Activated T-helper 1 cell treated with anti-CD3 and anti-CD28 coated beads, Interleukin-12 subunit alpha, Interleukin-12 subunit beta, Interleukin-2, Interleukin-4 antibody, amounts not matched to agents 30 ng/mL and 10 ng/mL and 1 ng/mL, durations not matched to agents 14 hours and 24 hours and 36 hours (primary cell): ENCODE measurements at regions of chr2 and their contacts with region 1.

Region 1: GRCh38 chr2:196160101-196160500 is 11.3 kb downstream of the STK17B start:
- DNase-seq: peak; percentile 74
- H3K4me3 Mint-ChIP-seq: peak overlapping the region; percentile 76
- H3K27ac Mint-ChIP-seq: peak overlapping the region; percentile 93
- H3K4me1 Mint-ChIP-seq: peaks cover 91% of the 10 kb centered on the region
- H3K27me3 Mint-ChIP-seq: no peaks in the 10 kb centered on the region

Region 2: GRCh38 chr2:196137271-196137670 is 22.8 kb before region 1 on chr2:
- intact Hi-C with region 1: loop called (anchors 2 kb)
- DNase-seq: no peak
- H3K4me3 Mint-ChIP-seq: no peak overlapping the region
- H3K27ac Mint-ChIP-seq: no peak overlapping the region
- H3K4me1 Mint-ChIP-seq: peaks cover 41% of the 10 kb centered on the region
- H3K27me3 Mint-ChIP-seq: no peaks in the 10 kb centered on the region

Region 3: DNA sequence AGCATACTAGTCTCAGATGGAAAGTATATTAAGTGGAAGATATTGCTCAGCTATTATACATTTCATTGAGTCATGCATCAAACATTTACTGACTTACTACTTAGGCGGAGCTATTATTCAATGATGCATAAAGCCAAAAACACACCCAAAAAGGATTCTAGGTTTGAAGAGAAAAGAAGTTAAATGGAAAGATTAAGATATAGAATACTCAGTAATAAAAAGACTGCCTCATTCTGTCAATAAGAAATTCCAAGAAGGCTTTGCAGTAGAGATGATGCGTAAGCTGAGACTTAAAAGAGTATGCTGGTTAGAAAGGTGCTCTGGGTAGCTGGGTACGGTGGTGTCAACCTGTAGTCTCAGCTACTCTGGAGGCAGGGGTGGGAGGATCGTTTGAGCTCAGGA is 16.4 kb before region 1 on chr2:
- intact Hi-C with region 1: loop called (anchors 2 kb)
- DNase-seq: no peak
- H3K4me3 Mint-ChIP-seq: peak overlapping the region; percentile 23
- H3K27ac Mint-ChIP-seq: peak overlapping the region; percentile 88
- H3K4me1 Mint-ChIP-seq: peaks cover 59% of the 10 kb centered on the region
- H3K27me3 Mint-ChIP-seq: no peaks in the 10 kb centered on the region

Region 4: GRCh38 chr2:196149948-196150347 is 10.2 kb before region 1 on chr2:
- intact Hi-C with region 1: loop called (anchors 1 kb)
- DNase-seq: no peak
- H3K4me3 Mint-ChIP-seq: peak overlapping the region; percentile 65
- H3K27ac Mint-ChIP-seq: peak overlapping the region; percentile 77
- H3K4me1 Mint-ChIP-seq: peaks cover 91% of the 10 kb centered on the region
- H3K27me3 Mint-ChIP-seq: no peaks in the 10 kb centered on the region

Region 5: GRCh38 chr2:196183172-196183473 is 23.0 kb after region 1 on chr2:
- intact Hi-C with region 1: no loop called
- DNase-seq: no peak
- H3K4me3 Mint-ChIP-seq: peak overlapping the region; percentile 30
- H3K27ac Mint-ChIP-seq: peak overlapping the region; percentile 91
- H3K4me1 Mint-ChIP-seq: peaks cover 60% of the 10 kb centered on the region
- H3K27me3 Mint-ChIP-seq: no peaks in the 10 kb centered on the region

Region 6: GRCh38 chr2:196441527-196441926 is 281.4 kb after region 1 on chr2:
- intact Hi-C with region 1: no loop called
- DNase-seq: no peak
- H3K4me3 Mint-ChIP-seq: no peak overlapping the region
- H3K27ac Mint-ChIP-seq: no peak overlapping the region
- H3K4me1 Mint-ChIP-seq: no peaks in the 10 kb centered on the region
- H3K27me3 Mint-ChIP-seq: peaks cover 24% of the 10 kb centered on the region